Activated CD4-positive, alpha-beta T cell treated with anti-CD3 and anti-CD28 coated beads for 36 hours (primary cell): ENCODE measurements at regions of chr1 and their contacts with region 1.

Region 1: DNA sequence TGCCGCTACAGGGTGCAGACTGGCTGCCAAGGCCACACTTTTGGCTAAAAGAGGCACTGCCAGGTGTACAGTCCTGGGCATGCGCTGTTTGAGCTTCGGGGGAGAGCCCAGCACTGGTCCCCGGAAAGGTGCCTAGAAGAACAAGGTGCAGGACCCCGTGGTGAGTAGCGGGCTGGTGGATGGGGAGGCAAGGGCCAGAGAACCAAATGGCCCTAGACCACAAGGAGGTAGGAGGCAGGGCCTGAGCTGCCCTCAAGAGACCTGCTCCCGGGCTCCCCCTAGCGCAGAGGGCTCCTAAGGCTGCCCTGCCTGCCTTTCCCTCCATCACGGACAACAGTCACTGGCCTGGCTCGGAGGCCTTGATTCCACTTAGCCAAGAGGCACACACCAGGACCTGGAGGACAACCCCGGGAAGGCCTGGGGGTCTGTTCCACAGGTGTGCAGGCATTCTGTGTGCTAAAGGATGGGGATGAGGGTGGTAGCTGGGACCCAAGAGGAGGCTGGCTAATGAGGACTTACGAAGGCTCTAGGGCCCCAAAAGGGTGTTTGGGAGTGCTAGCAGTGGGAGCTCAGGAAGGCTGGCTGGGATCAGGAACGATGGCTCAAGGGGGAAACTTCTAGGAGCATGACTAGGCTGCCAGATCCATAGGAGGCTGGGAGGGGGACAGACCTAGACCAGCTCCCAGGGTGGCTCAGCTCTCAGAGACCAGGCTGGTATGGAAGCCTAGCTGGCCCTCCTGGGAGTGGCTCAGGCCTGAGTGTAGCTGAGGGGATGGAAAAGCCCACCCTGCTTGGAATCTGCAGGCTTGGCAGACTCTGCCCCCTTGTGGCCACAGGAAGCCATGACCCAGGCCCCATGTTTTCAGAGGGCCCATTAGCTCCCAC is 742 bp downstream of the ARTN start:
- DNase-seq: peak; percentile 84
- ATAC-seq: peak; percentile 73
- H3K4me3 Mint-ChIP-seq: peak overlapping the region; percentile 16
- H3K27ac Mint-ChIP-seq: no peak overlapping the region
- H3K4me1 Mint-ChIP-seq: peaks cover 15% of the 10 kb centered on the region
- H3K27me3 Mint-ChIP-seq: peaks cover 25% of the 10 kb centered on the region

Region 2: GRCh38 chr1:42886800-42887199 is 1047.5 kb before region 1 on chr1:
- CTCF ChIA-PET with region 1: no interaction called
- POLR2A ChIA-PET with region 1: no interaction called
- intact Hi-C with region 1: no loop called
- DNase-seq: no peak
- ATAC-seq: no peak
- H3K4me3 Mint-ChIP-seq: no peak overlapping the region
- H3K27ac Mint-ChIP-seq: no peak overlapping the region
- H3K4me1 Mint-ChIP-seq: no peaks in the 10 kb centered on the region
- H3K27me3 Mint-ChIP-seq: peaks cover 4% of the 10 kb centered on the region

Region 3: GRCh38 chr1:43763497-43763973 is 170.8 kb before region 1 on chr1:
- CTCF ChIA-PET with region 1: interaction called, 136 read pairs
- POLR2A ChIA-PET with region 1: no interaction called
- intact Hi-C with region 1: loop called (anchors 1 kb)
- DNase-seq: peak; percentile 59
- ATAC-seq: peak; percentile 90
- H3K4me3 Mint-ChIP-seq: no peak overlapping the region
- H3K27ac Mint-ChIP-seq: no peak overlapping the region
- H3K4me1 Mint-ChIP-seq: no peaks in the 10 kb centered on the region
- H3K27me3 Mint-ChIP-seq: no peaks in the 10 kb centered on the region

Region 4: GRCh38 chr1:43796111-43796581 is 138.2 kb before region 1 on chr1:
- CTCF ChIA-PET with region 1: interaction called, 10 read pairs
- POLR2A ChIA-PET with region 1: no interaction called
- intact Hi-C with region 1: no loop called
- DNase-seq: no peak
- ATAC-seq: no peak
- H3K4me3 Mint-ChIP-seq: no peak overlapping the region
- H3K27ac Mint-ChIP-seq: no peak overlapping the region
- H3K4me1 Mint-ChIP-seq: peaks cover 7% of the 10 kb centered on the region
- H3K27me3 Mint-ChIP-seq: no peaks in the 10 kb centered on the region

Region 5: DNA sequence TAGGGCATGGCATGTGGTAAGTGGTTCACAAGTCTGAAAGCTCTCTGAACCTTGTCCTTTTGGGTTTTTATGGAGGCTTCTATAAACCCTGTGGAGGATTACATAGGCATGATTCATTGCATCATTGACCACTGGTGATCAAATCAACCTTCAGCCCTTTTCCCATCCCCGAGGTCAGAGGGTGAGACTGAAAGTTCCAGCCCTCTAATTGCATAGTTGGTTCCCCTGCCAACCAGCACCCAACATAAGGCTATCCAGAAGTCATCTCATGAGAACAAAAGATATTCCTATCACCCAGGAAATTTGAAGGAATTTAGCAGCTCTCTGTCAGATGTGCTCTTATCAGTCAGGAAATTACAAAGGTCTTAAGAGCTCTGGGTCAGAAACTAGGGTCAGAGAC is 90.2 kb before region 1 on chr1:
- CTCF ChIA-PET with region 1: no interaction called
- POLR2A ChIA-PET with region 1: no interaction called
- intact Hi-C with region 1: no loop called
- DNase-seq: no peak
- ATAC-seq: no peak
- H3K4me3 Mint-ChIP-seq: no peak overlapping the region
- H3K27ac Mint-ChIP-seq: no peak overlapping the region
- H3K4me1 Mint-ChIP-seq: peaks cover 15% of the 10 kb centered on the region
- H3K27me3 Mint-ChIP-seq: no peaks in the 10 kb centered on the region

Region 6: GRCh38 chr1:43952731-43953346 is 18.5 kb after region 1 on chr1:
- CTCF ChIA-PET with region 1: interaction called, 96 read pairs
- POLR2A ChIA-PET with region 1: interaction called, 3 read pairs
- intact Hi-C with region 1: no loop called
- DNase-seq: no peak
- ATAC-seq: no peak
- H3K4me3 Mint-ChIP-seq: no peak overlapping the region
- H3K27ac Mint-ChIP-seq: no peak overlapping the region
- H3K4me1 Mint-ChIP-seq: peaks cover 19% of the 10 kb centered on the region
- H3K27me3 Mint-ChIP-seq: no peaks in the 10 kb centered on the region

Region 7: GRCh38 chr1:44227211-44227610 is 292.9 kb after region 1 on chr1:
- CTCF ChIA-PET with region 1: no interaction called
- POLR2A ChIA-PET with region 1: no interaction called
- intact Hi-C with region 1: no loop called
- DNase-seq: no peak
- ATAC-seq: no peak
- H3K4me3 Mint-ChIP-seq: no peak overlapping the region
- H3K27ac Mint-ChIP-seq: no peak overlapping the region
- H3K4me1 Mint-ChIP-seq: peaks cover 11% of the 10 kb centered on the region
- H3K27me3 Mint-ChIP-seq: no peaks in the 10 kb centered on the region